AG04450 (cell line): ENCODE measurements at regions of chr16 and their contacts with region 1.

Region 1: GRCh38 chr16:53297477-53297876 is 136.8 kb upstream of the RBL2 start:
- DNase-seq: no peak
- H3K4me3 ChIP-seq: no peak overlapping the region
- H3K27ac ChIP-seq: no peak overlapping the region
- H3K27me3 ChIP-seq: no peaks in the 10 kb centered on the region
- CTCF ChIP-seq: no peak

Region 2: GRCh38 chr16:53282975-53283946 is 14.2 kb before region 1 on chr16:
- CTCF ChIA-PET with region 1: interaction called, 12 read pairs
- POLR2A ChIA-PET with region 1: no interaction called
- DNase-seq: peak; percentile 4
- H3K4me3 ChIP-seq: no peak overlapping the region
- H3K27ac ChIP-seq: no peak overlapping the region
- H3K27me3 ChIP-seq: no peaks in the 10 kb centered on the region
- CTCF ChIP-seq: peak; percentile 59

Region 3: DNA sequence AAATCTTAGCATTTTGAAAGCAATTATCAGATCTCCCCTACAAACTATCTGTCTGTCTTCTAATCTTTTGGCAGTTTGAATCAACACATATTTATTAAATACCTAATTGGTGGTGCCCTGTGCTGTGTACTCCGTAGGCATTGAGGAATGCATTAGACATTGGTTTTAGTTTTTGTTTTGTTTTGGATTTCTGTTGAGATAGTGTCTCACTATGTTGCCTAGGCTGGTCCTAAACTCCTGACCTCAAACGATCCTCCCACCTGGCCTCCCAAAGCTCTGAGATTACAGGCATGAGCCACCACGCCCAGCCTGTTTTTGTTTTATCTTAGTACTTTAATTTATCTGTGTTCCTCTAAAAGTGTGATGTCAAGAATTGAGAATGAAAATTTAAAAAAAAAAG is 12.0 kb after region 1 on chr16:
- CTCF ChIA-PET with region 1: no interaction called
- POLR2A ChIA-PET with region 1: no interaction called
- DNase-seq: no peak
- H3K4me3 ChIP-seq: no peak overlapping the region
- H3K27ac ChIP-seq: no peak overlapping the region
- H3K27me3 ChIP-seq: no peaks in the 10 kb centered on the region
- CTCF ChIP-seq: no peak